Esophagus muscularis mucosa (tissue), 4 donors: ENCODE measurements at regions of chr11 and their contacts with region 1.

Region 1: DNA sequence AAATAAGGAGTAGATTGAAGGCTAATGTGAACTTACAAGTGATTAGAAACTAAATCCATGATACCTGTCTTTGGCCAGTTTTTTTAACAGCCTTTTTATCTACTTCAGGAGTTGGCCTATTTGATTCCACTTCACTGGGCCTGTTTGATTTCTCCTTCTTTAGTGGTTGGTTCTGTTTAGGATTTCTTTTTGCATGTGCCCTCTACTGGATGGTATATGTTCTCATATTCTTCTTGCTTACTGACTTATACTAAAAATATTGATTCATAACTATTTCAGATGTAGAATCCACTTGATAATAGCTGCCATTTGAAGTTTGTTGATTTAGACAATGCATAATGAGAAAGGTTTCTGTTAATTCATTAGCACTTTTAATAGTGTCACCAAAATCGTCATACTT is 53.9 kb downstream of the USP47 start:
- DNase-seq: no peak
- H3K4me3 ChIP-seq: no peak overlapping the region
- H3K27ac ChIP-seq: no peak overlapping the region
- H3K4me1 ChIP-seq: peaks cover 0 to 7% (median 1%) of the 10 kb centered on the region in 4 donors
- H3K27me3 ChIP-seq: no peaks in the 10 kb centered on the region
- CTCF ChIP-seq: no peak
- EP300 ChIP-seq: no peak
- POLR2A ChIP-seq: no peak

Region 2: GRCh38 chr11:11451501-11452005 is 444.1 kb before region 1 on chr11:
- intact Hi-C with region 1: no loop called
- DNase-seq: no peak
- H3K4me3 ChIP-seq: no peak overlapping the region
- H3K27ac ChIP-seq: peak overlapping the region in 1 of 4 donors; percentile 68
- H3K4me1 ChIP-seq: peaks cover 0 to 61% (median 27%) of the 10 kb centered on the region in 4 donors
- H3K27me3 ChIP-seq: no peaks in the 10 kb centered on the region
- CTCF ChIP-seq: no peak
- EP300 ChIP-seq: no peak
- POLR2A ChIP-seq: no peak

Region 3: DNA sequence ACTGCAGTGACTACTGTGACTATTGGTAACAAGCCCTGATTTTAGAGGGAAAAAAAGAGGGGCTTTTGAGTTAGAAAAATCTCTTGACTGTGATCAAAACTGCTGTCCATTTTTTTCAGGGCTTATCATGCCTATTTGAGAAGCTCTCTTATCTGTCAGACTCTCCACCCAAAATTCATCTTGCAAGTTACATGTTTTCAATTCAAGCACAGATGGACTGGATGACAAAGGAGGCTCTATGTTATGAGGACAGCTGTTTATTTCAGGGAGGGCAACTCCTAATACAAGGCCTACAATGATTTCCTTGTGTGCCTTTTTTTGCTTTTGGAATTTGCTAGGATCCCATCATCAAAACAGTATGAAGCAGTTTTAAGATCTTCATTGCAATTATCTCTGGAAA is 89.1 kb before region 1 on chr11:
- intact Hi-C with region 1: loop called (anchors 10 kb)
- DNase-seq: peak; percentile 17
- H3K4me3 ChIP-seq: no peak overlapping the region
- H3K27ac ChIP-seq: peak overlapping the region in 1 of 4 donors; percentile 1
- H3K4me1 ChIP-seq: peaks cover 3 to 22% (median 14%) of the 10 kb centered on the region in 4 donors
- H3K27me3 ChIP-seq: no peaks in the 10 kb centered on the region
- CTCF ChIP-seq: no peak
- EP300 ChIP-seq: no peak
- POLR2A ChIP-seq: no peak

Region 4: DNA sequence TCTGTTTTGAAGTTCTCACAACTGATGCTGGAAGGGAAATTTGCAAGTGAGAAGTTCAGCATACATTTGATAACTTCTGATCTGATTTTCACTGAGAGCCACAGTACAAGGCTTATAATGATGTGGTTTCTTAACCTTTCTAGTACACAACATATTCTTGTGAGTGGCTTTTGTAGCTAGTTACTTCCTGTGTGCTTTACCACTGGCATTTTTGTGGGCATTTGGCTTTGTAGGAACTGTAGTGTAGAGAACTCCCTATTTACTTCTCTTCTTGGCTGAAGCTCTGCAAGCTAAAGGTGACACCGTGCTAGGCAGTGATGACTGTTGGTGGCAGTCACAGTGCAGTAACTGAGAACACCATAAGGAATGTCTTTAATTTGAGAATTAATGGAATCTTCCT is 39.0 kb before region 1 on chr11:
- intact Hi-C with region 1: no loop called
- DNase-seq: no peak
- H3K4me3 ChIP-seq: no peak overlapping the region
- H3K27ac ChIP-seq: no peak overlapping the region
- H3K4me1 ChIP-seq: peaks cover 38 to 92% (median 77%) of the 10 kb centered on the region in 4 donors
- H3K27me3 ChIP-seq: no peaks in the 10 kb centered on the region
- CTCF ChIP-seq: no peak
- EP300 ChIP-seq: no peak
- POLR2A ChIP-seq: no peak

Region 5: DNA sequence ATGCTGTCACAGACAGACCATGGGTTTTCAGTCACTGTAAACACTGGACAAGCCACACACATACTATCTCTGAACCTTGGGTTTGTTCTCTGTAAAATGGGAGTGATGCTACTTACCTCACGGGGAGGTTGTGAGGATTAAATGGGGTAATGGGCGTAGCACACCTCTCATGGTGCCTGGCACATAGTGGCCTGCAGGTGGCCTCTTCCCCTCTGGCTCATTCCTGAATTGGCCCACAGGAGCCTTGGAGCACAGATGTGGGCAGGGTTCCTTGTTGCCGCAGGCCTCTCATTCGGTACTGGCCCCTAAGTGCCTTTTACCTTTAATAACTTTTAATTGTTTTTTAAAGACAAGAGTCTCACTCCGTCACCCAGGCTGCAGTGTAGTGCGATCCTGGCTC is 226.4 kb after region 1 on chr11:
- intact Hi-C with region 1: no loop called
- DNase-seq: no peak
- H3K4me3 ChIP-seq: no peak overlapping the region
- H3K27ac ChIP-seq: peak overlapping the region; percentile 80 to 98 (median 95)
- H3K4me1 ChIP-seq: peaks cover 74 to 100% (median 98%) of the 10 kb centered on the region in 4 donors
- H3K27me3 ChIP-seq: no peaks in the 10 kb centered on the region
- CTCF ChIP-seq: peak; percentile 51 to 57 (median 54)
- EP300 ChIP-seq: no peak
- POLR2A ChIP-seq: no peak